Posterior vena cava (tissue), 2 donors: ENCODE measurements at regions of chr2 and their contacts with region 1.

Region 1: DNA sequence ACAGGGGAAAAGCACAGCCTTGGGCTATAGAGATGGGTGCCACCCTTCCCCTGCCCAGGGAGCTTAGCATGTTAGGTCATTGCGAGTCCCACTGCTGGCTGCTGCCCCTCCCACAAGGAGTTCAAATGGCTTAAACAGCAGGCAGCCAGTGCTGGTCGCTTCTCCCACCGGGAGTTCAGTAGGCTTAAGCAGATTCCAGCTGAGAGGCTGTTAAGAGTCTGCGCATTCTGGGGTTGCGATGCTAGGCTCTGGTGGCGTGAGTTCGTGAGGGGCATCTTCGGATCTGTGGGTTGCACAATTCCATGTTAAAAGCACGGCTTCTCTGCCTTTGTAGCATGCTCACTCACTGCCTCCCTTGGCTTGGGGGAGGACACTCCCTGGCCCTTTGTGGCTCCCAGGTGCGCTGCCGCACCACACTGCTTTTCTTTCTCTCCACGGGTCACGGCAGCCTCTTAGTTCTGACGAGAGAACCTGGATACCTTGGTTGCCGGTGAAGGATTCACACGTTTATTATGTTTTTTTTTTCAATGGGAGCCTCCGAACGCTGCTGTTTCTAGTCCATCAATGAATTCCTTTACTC is 93.2 kb downstream of the UNC80 start:
- DNase-seq: no peak

Region 2: GRCh38 chr2:210324458-210324857 is 459.7 kb after region 1 on chr2:
- intact Hi-C with region 1: no loop called
- DNase-seq: no peak

Region 3: GRCh38 chr2:210519594-210519993 is 654.8 kb after region 1 on chr2:
- intact Hi-C with region 1: loop called in 1 of 2 experiments (anchors 5 kb)
- DNase-seq: no peak